Mammary epithelial cell (primary cell): ENCODE measurements at regions of chr7 and their contacts with region 1.

Region 1: GRCh38 chr7:156949541-156950380 is at the start of gene NOM1:
- DNase-seq: peak; percentile 79
- H3K4me3 ChIP-seq: peak within 1 kb of the TSS; percentile 77 to 95 (median 88)
- H3K27ac ChIP-seq: peak within 1 kb of the TSS; percentile 69
- H3K4me1 ChIP-seq: peaks cover 21% of the 10 kb centered on the region
- H3K27me3 ChIP-seq: no peaks in the 10 kb centered on the region
- CTCF ChIP-seq: peak; percentile 64 to 66
- total RNA-seq, gene NOM1: 13.5 to 30.2 TPM

Region 2: DNA sequence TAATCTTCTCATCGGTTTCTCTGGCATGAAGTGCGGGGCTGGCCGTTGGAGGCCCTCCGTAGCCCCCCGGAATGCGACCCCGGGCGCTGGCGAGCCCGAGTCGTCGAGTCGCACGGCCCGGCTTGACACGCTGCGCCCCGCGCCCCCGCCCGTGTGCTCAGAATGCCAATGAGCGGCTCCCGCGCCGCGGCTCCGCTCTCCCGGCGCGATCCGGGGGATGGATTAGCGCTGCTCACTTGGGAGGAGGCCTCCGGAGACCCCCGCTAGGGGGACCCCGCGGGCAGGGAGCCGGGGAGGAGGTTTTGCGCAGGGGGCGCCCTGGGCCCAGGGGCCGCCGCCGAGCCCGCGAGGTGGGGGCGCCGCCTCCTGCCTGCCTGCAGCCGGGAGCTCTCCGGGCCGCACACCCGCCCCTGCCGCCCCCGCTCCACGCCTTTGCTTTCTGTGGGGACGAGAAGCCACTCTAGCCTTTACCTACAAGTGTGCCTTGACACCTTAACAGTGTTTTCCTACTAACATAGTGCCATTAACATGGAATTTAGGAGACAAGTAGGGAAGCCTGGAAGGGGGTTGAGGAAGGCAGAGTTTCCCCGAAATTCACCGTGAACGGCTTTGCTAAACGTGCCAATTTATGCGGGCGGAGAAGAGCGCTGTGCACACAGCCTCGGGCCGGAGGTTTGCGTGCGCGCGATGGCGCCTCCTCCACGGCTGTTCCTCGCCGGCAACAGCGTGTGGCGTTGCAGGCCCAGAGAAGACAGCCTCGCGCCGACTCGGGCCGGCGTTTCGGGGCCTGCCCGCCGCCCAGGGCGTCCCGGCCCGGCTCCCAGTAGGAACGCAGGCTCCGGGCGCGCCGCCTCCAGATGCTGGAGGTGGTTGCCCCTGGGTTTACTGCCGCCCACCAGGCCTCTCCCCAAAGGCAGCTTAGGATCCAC is 1144.6 kb before region 1 on chr7:
- CTCF ChIA-PET with region 1: no interaction called
- dilution Hi-C with region 1: no loop called
- in situ Hi-C with region 1: no loop called
- intact Hi-C with region 1: loop called (anchors 10 kb)
- DNase-seq: peak; percentile 62
- H3K4me3 ChIP-seq: peak overlapping the region; percentile 32 to 54 (median 49)
- H3K27ac ChIP-seq: no peak overlapping the region
- H3K4me1 ChIP-seq: peaks cover 15% of the 10 kb centered on the region
- H3K27me3 ChIP-seq: peaks cover 27% of the 10 kb centered on the region
- CTCF ChIP-seq: peak; percentile 28 to 61

Region 3: DNA sequence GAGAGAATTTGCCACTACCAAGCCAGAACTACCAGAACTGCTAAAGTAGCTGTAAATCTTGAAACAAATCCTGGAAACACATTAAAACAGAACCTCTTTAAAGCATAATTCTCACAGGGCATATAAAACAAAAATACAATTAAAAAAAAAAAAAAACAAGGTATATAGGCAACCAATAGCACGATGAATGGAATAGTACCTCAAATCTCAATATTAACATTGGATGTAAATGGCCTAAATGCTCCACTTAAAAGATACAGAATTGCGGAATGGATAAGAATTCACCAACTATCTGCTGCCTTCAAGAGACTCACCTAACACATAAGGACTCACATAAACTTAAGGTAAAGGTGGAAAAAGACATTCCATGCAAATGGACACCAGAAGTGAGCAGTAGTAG is 74.0 kb before region 1 on chr7:
- CTCF ChIA-PET with region 1: no interaction called
- dilution Hi-C with region 1: no loop called
- in situ Hi-C with region 1: no loop called
- intact Hi-C with region 1: no loop called
- DNase-seq: no peak
- H3K4me3 ChIP-seq: no peak overlapping the region
- H3K27ac ChIP-seq: no peak overlapping the region
- H3K4me1 ChIP-seq: no peaks in the 10 kb centered on the region
- H3K27me3 ChIP-seq: no peaks in the 10 kb centered on the region
- CTCF ChIP-seq: no peak

Region 4: GRCh38 chr7:156892821-156893706 is 56.7 kb before region 1 on chr7 and contains the start of gene LMBR1:
- CTCF ChIA-PET with region 1: interaction called, 7 read pairs
- dilution Hi-C with region 1: no loop called
- in situ Hi-C with region 1: no loop called
- intact Hi-C with region 1: loop called (anchors 1 kb)
- DNase-seq: peak; percentile 90
- H3K4me3 ChIP-seq: peak within 1 kb of the TSS; percentile 79 to 90 (median 90)
- H3K27ac ChIP-seq: peak within 1 kb of the TSS; percentile 85
- H3K4me1 ChIP-seq: peaks cover 13% of the 10 kb centered on the region
- H3K27me3 ChIP-seq: peaks cover 2% of the 10 kb centered on the region
- CTCF ChIP-seq: peak; percentile 58 to 65
- total RNA-seq, gene LMBR1: 63.7 to 65.6 TPM

Region 5: DNA sequence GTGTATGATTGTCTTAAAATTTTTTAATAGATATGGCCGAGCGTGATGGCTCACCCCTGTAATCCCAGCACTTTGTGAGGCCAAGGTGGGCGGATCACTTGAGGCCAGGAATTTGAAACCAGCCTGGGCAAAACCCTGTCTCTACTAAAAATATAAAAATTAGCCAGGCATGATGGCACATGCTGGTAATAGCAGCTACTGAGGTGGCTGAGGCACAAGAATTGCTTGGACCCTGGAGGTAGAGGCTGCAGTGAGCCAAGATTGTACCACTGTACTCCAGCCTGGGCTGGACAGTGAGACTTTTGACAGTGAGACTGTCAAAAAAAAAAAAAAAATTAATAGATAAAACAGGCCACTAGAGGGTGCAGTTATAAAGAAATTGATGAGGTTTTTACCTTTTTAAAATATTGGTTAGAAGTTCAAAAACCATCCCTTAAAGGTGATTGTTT is 20.2 kb after region 1 on chr7:
- CTCF ChIA-PET with region 1: no interaction called
- dilution Hi-C with region 1: no loop called
- in situ Hi-C with region 1: no loop called
- intact Hi-C with region 1: loop called (anchors 2 kb)
- DNase-seq: peak; percentile 85
- H3K4me3 ChIP-seq: no peak overlapping the region
- H3K27ac ChIP-seq: peak overlapping the region; percentile 72
- H3K4me1 ChIP-seq: peaks cover 29% of the 10 kb centered on the region
- H3K27me3 ChIP-seq: no peaks in the 10 kb centered on the region
- CTCF ChIP-seq: peak in 1 of 2 donors; percentile 28

Region 6: GRCh38 chr7:157150882-157151281 is 201.1 kb after region 1 on chr7:
- CTCF ChIA-PET with region 1: no interaction called
- dilution Hi-C with region 1: no loop called
- in situ Hi-C with region 1: loop called in 1 of 2 experiments (anchors 25 kb)
- intact Hi-C with region 1: no loop called
- DNase-seq: no peak
- H3K4me3 ChIP-seq: no peak overlapping the region
- H3K27ac ChIP-seq: no peak overlapping the region
- H3K4me1 ChIP-seq: peaks cover 24% of the 10 kb centered on the region
- H3K27me3 ChIP-seq: no peaks in the 10 kb centered on the region
- CTCF ChIP-seq: no peak

Region 7: GRCh38 chr7:157273208-157274093 is 323.7 kb after region 1 on chr7:
- CTCF ChIA-PET with region 1: no interaction called
- dilution Hi-C with region 1: no loop called
- in situ Hi-C with region 1: no loop called
- intact Hi-C with region 1: loop called (anchors 2 kb)
- DNase-seq: peak; percentile 56
- H3K4me3 ChIP-seq: no peak overlapping the region
- H3K27ac ChIP-seq: no peak overlapping the region
- H3K4me1 ChIP-seq: peaks cover 36% of the 10 kb centered on the region
- H3K27me3 ChIP-seq: no peaks in the 10 kb centered on the region
- CTCF ChIP-seq: peak; percentile 85 to 94

Region 8: GRCh38 chr7:157292699-157293412 is 343.1 kb after region 1 on chr7:
- CTCF ChIA-PET with region 1: no interaction called
- dilution Hi-C with region 1: no loop called
- in situ Hi-C with region 1: no loop called
- intact Hi-C with region 1: no loop called
- DNase-seq: peak; percentile 76
- H3K4me3 ChIP-seq: peak overlapping the region in 2 of 3 experiments; percentile 8 to 24
- H3K27ac ChIP-seq: peak overlapping the region; percentile 33
- H3K4me1 ChIP-seq: peaks cover 31% of the 10 kb centered on the region
- H3K27me3 ChIP-seq: no peaks in the 10 kb centered on the region
- CTCF ChIP-seq: no peak

Region 9: GRCh38 chr7:157386979-157387800 is 437.4 kb after region 1 on chr7:
- CTCF ChIA-PET with region 1: no interaction called
- dilution Hi-C with region 1: no loop called
- in situ Hi-C with region 1: loop called in 1 of 2 experiments (anchors 25 kb)
- intact Hi-C with region 1: no loop called
- DNase-seq: peak; percentile 77
- H3K4me3 ChIP-seq: no peak overlapping the region
- H3K27ac ChIP-seq: peak overlapping the region; percentile 31
- H3K4me1 ChIP-seq: peaks cover 10% of the 10 kb centered on the region
- H3K27me3 ChIP-seq: no peaks in the 10 kb centered on the region
- CTCF ChIP-seq: peak; percentile 91 to 92